ENCODE measurements at regions of chr3 and their contacts with region 1.

Region 1: DNA sequence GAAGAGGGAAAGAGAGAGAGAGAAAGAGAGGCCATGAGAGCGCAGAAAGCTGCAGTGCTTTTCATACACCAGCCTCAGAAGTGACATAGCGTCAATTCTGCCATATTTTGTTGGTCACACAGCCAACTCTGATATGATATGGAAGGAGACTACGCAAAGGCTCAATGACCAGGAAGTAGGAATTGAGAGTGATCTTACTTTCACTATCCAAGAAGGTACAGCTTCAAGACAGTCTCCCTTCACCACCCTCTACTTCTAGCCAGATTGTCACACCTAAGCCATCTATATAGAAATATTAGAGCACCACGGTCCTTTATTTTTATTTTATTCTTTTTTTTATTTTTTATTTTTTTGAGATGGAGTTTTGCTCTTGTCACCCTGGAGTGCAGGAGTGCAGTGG is 21.1 kb downstream of the PARP15 start:
- DNase-seq: no peak
- ATAC-seq: no peak
- H3K4me3 ChIP-seq: no peak overlapping the region
- H3K27ac ChIP-seq: no peak overlapping the region
- H3K4me1 ChIP-seq: no peaks in the 10 kb centered on the region
- H3K27me3 ChIP-seq: no peaks in the 10 kb centered on the region

Region 2: DNA sequence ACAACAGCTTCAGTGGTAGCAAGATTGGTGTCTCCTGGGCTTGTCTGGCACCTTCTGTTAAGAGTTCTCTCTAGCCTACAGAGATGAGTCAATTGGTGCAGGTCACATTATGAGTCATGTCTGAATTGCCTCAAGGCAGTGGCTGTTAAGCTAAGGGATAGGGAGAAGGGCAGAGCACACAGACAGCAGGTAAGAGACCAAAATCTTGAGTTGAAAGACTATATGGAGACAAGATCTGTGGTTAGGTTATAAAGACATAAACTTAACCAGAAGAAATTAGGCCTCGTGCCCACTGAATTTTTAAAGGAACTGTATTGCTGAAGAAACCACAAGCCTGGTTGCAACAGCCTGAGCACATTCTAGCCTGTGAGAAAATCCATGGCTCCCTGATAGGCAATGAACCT is 64.6 kb before region 1 on chr3:
- intact Hi-C with region 1: no loop called
- DNase-seq: no peak
- ATAC-seq: no peak
- H3K4me3 ChIP-seq: no peak overlapping the region
- H3K27ac ChIP-seq: no peak overlapping the region
- H3K4me1 ChIP-seq: no peaks in the 10 kb centered on the region
- H3K27me3 ChIP-seq: no peaks in the 10 kb centered on the region

Region 3: DNA sequence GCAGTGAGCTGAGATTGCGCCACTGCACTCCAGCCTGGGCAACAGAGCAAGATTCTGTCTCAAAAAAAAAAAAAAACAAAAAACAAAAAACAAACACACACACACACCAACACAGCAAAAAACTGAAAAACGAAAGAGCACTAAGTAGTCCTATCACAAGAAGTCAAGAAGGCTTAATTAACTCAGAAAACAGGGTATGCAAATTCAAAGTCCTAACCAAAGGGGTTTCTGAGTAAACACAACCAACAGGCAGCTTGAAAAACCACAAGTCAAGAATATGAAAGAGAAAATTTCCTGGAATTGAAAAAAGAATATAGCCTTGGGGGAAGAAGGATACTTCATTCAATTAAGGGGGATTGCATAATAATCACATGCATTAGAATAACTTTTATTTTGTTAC is 44.4 kb after region 1 on chr3:
- intact Hi-C with region 1: loop called in 1 of 2 experiments (anchors 2 kb)
- DNase-seq: no peak
- ATAC-seq: no peak
- H3K4me3 ChIP-seq: no peak overlapping the region
- H3K27ac ChIP-seq: no peak overlapping the region
- H3K4me1 ChIP-seq: no peaks in the 10 kb centered on the region
- H3K27me3 ChIP-seq: no peaks in the 10 kb centered on the region